T-cell (primary cell): ENCODE measurements at regions of chr11 and their contacts with region 1.

Region 1: DNA sequence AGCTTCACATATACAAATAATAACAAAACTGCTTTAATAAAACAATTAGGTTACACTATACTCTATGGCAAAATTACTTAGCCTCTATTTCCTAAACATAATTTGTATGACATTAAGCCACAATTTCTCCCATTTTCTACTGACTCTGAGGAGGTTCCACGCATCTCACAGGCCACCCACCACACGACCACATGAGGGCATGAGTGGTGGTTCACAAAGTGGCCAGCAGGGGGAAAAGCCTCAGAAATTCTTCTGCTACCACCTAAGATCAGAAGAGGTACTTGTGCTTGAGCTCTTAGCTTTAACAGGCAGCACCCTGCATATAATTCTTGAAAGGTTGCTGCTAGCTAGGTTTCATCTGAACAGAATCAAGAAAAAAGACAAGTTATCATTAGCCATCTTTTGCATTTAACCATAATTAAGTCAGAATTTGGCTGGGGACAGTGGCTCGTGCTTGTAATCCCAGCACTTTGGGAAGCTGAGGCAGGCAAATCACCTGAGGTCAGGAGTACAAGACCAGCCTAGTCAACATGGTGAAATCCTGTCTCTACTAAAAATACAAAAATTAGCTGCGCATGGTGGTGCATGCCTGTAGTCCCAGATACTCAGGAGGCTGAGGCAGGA is 7.7 kb downstream of the LPXN start:
- DNase-seq: peak; percentile 57 to 89 (median 75)
- ATAC-seq: peak; percentile 97 to 99 (median 98)
- H3K4me3 ChIP-seq: no peak overlapping the region
- H3K4me3 Mint-ChIP-seq: peak overlapping the region; percentile 38 to 57 (median 54)
- H3K27ac ChIP-seq: no peak overlapping the region
- H3K27ac Mint-ChIP-seq: peak overlapping the region; percentile 71 to 83
- H3K4me1 ChIP-seq: peaks cover 34 to 46% of the 10 kb centered on the region in 2 experiments
- H3K4me1 Mint-ChIP-seq: peaks cover 60 to 73% (median 71%) of the 10 kb centered on the region in 3 donors
- H3K27me3 ChIP-seq: no peaks in the 10 kb centered on the region
- H3K27me3 Mint-ChIP-seq: no peaks in the 10 kb centered on the region

Region 2: DNA sequence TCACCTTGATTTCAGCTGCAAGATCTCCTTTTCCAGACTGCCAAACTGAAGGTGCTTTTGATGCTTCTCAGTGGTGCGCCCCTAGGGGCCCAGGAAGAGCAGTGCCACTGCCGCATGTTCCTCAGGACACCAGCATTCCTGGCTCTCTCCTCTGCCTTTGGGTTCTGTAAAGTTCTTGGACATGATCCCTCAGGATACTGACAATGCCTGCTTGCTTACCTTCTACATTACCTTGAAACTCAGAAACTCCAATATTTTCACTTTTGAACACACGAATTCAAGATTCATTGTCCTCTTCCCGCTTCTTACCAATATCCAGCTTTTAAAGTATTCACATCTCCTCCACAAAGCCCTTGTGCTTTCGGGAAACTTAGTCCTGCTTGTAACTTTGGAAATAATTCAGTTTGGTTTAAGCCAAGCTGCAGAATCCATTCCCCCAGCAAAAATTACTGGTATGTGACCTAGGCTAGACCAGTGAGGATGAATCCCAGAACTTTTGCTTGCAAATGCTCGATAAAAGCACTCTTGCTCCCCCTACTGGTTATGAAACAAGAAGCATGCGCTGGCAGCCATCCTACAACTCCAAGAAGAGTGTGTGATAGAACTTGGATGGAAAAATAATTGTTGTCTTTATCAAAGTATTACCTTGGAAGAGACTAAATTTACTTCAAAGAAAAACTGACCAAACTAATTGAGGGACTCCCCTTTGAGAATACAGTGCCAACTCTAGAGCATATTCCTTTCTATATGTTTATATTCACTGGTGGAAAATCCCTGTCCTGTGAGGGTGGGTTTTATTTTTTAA is 43.6 kb before region 1 on chr11:
- CTCF ChIA-PET with region 1: interaction called, 4 to 11 read pairs
- POLR2A ChIA-PET with region 1: no interaction called
- DNase-seq: peak in 30 of 35 experiments; percentile 11 to 85 (median 33)
- ATAC-seq: peak; percentile 52 to 64 (median 59)
- H3K4me3 ChIP-seq: peak overlapping the region; percentile 10 to 20
- H3K4me3 Mint-ChIP-seq: peak overlapping the region; percentile 68 to 73 (median 69)
- H3K27ac ChIP-seq: peak overlapping the region; percentile 88
- H3K27ac Mint-ChIP-seq: peak overlapping the region; percentile 91 to 93
- H3K4me1 ChIP-seq: peaks cover 17 to 54% of the 10 kb centered on the region in 2 experiments
- H3K4me1 Mint-ChIP-seq: peaks cover 66 to 73% (median 67%) of the 10 kb centered on the region in 3 donors
- H3K27me3 ChIP-seq: no peaks in the 10 kb centered on the region
- H3K27me3 Mint-ChIP-seq: no peaks in the 10 kb centered on the region

Region 3: DNA sequence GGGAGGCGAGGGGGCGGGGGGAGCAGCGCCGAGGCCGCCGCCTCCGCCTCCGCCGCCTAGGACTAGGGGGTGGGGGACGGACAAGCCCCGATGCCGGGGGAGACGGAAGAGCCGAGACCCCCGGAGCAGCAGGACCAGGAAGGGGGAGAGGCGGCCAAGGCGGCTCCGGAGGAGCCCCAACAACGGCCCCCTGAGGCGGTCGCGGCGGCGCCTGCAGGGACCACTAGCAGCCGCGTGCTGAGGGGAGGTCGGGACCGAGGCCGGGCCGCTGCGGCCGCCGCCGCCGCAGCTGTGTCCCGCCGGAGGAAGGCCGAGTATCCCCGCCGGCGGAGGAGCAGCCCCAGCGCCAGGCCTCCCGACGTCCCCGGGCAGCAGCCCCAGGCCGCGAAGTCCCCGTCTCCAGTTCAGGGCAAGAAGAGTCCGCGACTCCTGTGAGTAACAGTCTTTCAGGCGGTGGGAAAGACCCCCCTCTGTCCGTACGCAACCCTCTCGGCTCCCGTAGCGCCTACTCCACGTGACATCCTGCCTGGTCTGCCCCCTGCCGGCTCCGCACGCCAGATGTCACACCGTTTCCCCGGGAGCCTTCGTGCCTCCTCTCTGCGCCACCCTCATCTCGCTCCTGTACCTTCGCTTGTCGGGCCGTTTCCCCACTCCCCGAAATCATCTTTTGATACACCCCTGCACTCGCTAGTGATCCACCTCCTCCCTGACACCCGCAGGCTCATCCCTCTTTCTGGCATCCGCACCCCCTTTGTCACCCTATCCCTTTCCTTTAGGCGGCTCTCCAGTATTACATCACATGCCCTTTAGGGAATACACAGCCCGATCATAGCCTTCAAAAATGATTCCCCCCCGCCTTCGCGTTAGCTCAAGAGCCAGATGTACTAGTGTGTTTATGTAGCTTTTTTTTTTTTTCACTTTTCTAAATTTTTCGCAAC is 11.5 kb after region 1 on chr11:
- CTCF ChIA-PET with region 1: interaction called, 17 to 108 read pairs
- POLR2A ChIA-PET with region 1: interaction called, 12 to 35 read pairs
- DNase-seq: peak; percentile 82 to 96 (median 91)
- ATAC-seq: peak; percentile 44 to 52 (median 48)
- H3K4me3 ChIP-seq: peak overlapping the region; percentile 74 to 94
- H3K4me3 Mint-ChIP-seq: peak overlapping the region; percentile 93 to 99 (median 96)
- H3K27ac ChIP-seq: peak overlapping the region; percentile 89
- H3K27ac Mint-ChIP-seq: peak overlapping the region; percentile 96 to 100
- H3K4me1 ChIP-seq: peaks cover 26 to 56% of the 10 kb centered on the region in 2 experiments
- H3K4me1 Mint-ChIP-seq: peaks cover 66 to 75% (median 69%) of the 10 kb centered on the region in 3 donors
- H3K27me3 ChIP-seq: no peaks in the 10 kb centered on the region
- H3K27me3 Mint-ChIP-seq: no peaks in the 10 kb centered on the region

Region 4: GRCh38 chr11:58586998-58587397 is 19.0 kb after region 1 on chr11:
- CTCF ChIA-PET with region 1: interaction called, 6 to 21 read pairs
- POLR2A ChIA-PET with region 1: interaction called, 3 read pairs
- DNase-seq: no peak
- ATAC-seq: no peak
- H3K4me3 ChIP-seq: no peak overlapping the region
- H3K4me3 Mint-ChIP-seq: no peak overlapping the region
- H3K27ac ChIP-seq: no peak overlapping the region
- H3K27ac Mint-ChIP-seq: no peak overlapping the region
- H3K4me1 ChIP-seq: peaks cover 0 to 14% of the 10 kb centered on the region in 2 experiments
- H3K4me1 Mint-ChIP-seq: peaks cover 61 to 72% (median 72%) of the 10 kb centered on the region in 3 donors
- H3K27me3 ChIP-seq: no peaks in the 10 kb centered on the region
- H3K27me3 Mint-ChIP-seq: no peaks in the 10 kb centered on the region

Region 5: DNA sequence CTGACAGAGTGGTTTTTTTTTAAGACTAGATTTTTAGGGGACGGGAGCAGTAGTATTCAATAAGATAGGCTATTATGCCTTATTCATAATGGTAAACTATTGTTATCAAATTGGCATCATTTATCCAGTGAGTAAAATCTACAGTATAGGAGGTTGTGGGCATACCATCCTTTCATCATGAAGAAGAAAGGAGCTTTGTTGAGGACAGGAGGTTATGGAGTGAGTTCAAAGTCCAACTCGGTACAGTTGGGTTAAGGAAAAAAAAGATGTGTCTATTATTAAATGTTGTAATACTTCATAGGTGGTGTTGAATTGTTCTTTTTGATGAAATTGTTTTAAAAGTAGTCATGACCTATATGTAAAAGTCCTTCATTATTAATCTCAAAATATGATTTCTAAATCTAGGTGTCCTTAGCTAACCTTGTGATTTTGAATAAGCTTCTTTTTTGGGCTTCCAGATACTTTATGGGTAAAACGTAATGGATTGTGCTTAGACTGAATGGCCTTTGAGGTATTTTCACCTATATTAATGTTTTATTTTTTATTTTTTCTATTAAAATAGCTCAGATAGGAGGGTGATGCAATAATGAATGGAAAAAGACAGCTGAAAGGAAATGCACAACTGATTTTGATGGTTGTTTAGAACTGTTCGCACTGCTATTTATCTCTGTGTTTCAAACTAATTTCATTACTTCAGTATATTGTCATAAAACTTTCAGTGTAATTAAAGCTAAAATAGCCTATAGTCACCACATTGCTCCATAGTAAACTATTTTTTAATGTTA is 39.1 kb after region 1 on chr11:
- CTCF ChIA-PET with region 1: interaction called, 3 to 15 read pairs
- POLR2A ChIA-PET with region 1: no interaction called
- DNase-seq: no peak
- ATAC-seq: no peak
- H3K4me3 ChIP-seq: no peak overlapping the region
- H3K4me3 Mint-ChIP-seq: peak overlapping the region in 1 of 3 donors; percentile 33
- H3K27ac ChIP-seq: no peak overlapping the region
- H3K27ac Mint-ChIP-seq: peak overlapping the region in 1 of 2 donors; percentile 9
- H3K4me1 ChIP-seq: peaks cover 3 to 4% of the 10 kb centered on the region in 2 experiments
- H3K4me1 Mint-ChIP-seq: peaks cover 66 to 69% (median 67%) of the 10 kb centered on the region in 3 donors
- H3K27me3 ChIP-seq: no peaks in the 10 kb centered on the region
- H3K27me3 Mint-ChIP-seq: no peaks in the 10 kb centered on the region

Region 6: GRCh38 chr11:58629857-58630256 is 61.9 kb after region 1 on chr11:
- CTCF ChIA-PET with region 1: interaction called, 18 to 42 read pairs
- POLR2A ChIA-PET with region 1: no interaction called
- DNase-seq: peak in 10 of 35 experiments; percentile 1 to 54 (median 11)
- ATAC-seq: peak in 2 of 4 experiments; percentile 44 to 50
- H3K4me3 ChIP-seq: no peak overlapping the region
- H3K4me3 Mint-ChIP-seq: no peak overlapping the region
- H3K27ac ChIP-seq: no peak overlapping the region
- H3K27ac Mint-ChIP-seq: peak overlapping the region in 1 of 2 donors; percentile 71
- H3K4me1 ChIP-seq: no peaks in the 10 kb centered on the region
- H3K4me1 Mint-ChIP-seq: peaks cover 0 to 10% (median 6%) of the 10 kb centered on the region in 3 donors
- H3K27me3 ChIP-seq: no peaks in the 10 kb centered on the region
- H3K27me3 Mint-ChIP-seq: no peaks in the 10 kb centered on the region